ENCODE measurements at regions of chr3 and their contacts with region 1.

Region 1: GRCh38 chr3:60770532-60770931 is 480.7 kb downstream of the FHIT start:
- DNase-seq: no peak
- ATAC-seq: no peak
- H3K4me3 ChIP-seq: no peak overlapping the region
- H3K27ac ChIP-seq: no peak overlapping the region
- H3K4me1 ChIP-seq: no peaks in the 10 kb centered on the region
- H3K27me3 ChIP-seq: no peaks in the 10 kb centered on the region
- CTCF ChIP-seq: no peak
- EP300 ChIP-seq: no peak
- POLR2A ChIP-seq: no peak
- RAD21 ChIP-seq: no peak

Region 2: DNA sequence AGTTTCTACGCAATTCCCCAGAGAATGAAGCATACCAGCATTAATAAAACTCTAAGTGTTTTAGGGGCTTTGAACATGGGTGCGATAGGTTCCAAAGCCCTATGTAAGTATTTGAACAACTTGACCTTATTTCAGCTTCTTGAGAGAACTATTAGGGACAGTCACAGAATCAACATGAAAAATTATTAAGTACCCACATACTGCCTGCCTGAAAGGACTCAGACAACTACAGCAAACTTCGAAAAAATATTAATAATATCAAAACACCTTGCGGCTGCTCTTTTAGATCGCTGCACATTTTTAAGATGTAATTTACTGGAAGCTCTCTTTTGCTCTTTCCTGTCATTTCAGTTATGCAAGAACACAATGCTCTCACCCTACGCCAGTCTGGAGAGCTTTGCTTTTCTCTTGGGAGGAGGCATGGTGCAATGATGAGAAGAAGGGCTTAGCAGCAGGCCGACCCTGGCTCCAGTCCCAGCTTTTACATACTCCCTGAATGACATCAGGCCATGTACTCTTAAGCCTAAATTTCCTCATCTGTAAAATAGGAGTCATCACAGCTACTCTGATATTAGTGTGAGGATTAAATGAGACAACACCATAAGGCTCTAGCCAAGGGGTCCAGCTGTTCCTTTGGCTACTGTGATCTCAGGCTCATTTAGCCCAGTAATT is 160.0 kb before region 1 on chr3:
- CTCF ChIA-PET with region 1: no interaction called
- POLR2A ChIA-PET with region 1: no interaction called
- in situ Hi-C with region 1: loop called (anchors 10 kb)
- intact Hi-C with region 1: no loop called
- DNase-seq: no peak
- ATAC-seq: no peak
- H3K4me3 ChIP-seq: no peak overlapping the region
- H3K27ac ChIP-seq: no peak overlapping the region
- H3K4me1 ChIP-seq: no peaks in the 10 kb centered on the region
- H3K27me3 ChIP-seq: no peaks in the 10 kb centered on the region
- CTCF ChIP-seq: no peak
- EP300 ChIP-seq: no peak
- POLR2A ChIP-seq: no peak
- RAD21 ChIP-seq: no peak

Region 3: DNA sequence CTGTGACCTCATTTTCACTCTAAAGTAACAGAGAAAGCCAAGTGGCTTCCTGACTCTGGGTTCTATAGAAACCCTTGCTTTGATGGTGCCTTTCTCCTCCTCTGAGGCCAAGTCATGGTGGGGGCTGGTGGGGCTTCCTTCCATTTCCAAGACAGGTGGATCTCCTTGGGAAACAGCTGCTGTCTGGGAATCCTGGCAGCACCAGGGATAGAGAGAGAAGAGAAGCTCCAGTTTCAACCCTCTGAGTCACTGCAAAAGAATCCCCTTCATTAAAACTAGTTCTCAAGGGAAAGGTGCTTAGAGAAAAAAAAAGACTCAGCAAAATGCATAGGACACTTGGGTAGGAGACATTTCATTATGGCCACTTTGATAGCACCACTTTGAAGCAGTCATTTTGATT is 133.7 kb before region 1 on chr3:
- CTCF ChIA-PET with region 1: no interaction called
- POLR2A ChIA-PET with region 1: no interaction called
- in situ Hi-C with region 1: no loop called
- intact Hi-C with region 1: no loop called
- DNase-seq: no peak
- ATAC-seq: no peak
- H3K4me3 ChIP-seq: no peak overlapping the region
- H3K27ac ChIP-seq: no peak overlapping the region
- H3K4me1 ChIP-seq: no peaks in the 10 kb centered on the region
- H3K27me3 ChIP-seq: no peaks in the 10 kb centered on the region
- CTCF ChIP-seq: no peak
- EP300 ChIP-seq: no peak
- POLR2A ChIP-seq: no peak
- RAD21 ChIP-seq: no peak

Region 4: DNA sequence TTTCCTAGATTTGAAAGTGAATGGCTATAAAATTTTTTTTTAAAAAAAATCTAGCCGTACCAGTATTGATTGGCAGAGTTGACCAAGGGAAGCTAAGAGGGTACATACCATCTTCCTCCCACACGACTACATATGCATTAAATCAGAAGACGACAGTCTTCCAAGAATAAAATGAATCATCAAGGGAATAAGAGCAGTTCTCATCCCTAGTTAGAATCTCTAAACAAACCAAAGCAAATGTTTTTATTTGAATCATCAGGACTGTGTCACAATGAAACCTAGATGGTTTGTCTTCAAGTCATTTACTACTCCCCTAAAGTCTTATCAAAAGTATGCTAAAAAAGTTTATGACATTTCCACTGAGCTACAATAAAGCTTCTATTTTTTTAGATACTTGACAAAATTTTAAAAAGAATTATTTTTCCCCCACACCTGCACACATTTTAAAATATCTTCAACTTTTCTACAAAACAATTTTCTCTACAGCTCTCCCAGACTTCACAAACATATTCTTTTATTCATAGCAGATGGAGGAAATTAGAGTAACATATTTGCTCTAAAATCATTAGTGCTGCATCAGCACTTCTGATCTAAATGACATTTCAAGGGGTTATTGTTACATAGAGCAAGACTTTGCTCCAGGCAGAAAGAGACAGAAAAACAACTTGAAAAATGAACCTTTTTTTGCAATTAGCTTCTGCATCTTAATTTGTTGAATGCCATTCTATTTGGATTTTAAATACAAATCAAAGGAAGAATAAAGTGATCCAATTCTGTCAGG is 66.4 kb before region 1 on chr3:
- CTCF ChIA-PET with region 1: no interaction called
- POLR2A ChIA-PET with region 1: no interaction called
- in situ Hi-C with region 1: no loop called
- intact Hi-C with region 1: no loop called
- DNase-seq: no peak
- ATAC-seq: no peak
- H3K4me3 ChIP-seq: no peak overlapping the region
- H3K27ac ChIP-seq: no peak overlapping the region
- H3K4me1 ChIP-seq: no peaks in the 10 kb centered on the region
- H3K27me3 ChIP-seq: no peaks in the 10 kb centered on the region
- CTCF ChIP-seq: no peak
- EP300 ChIP-seq: no peak
- POLR2A ChIP-seq: no peak
- RAD21 ChIP-seq: no peak

Region 5: DNA sequence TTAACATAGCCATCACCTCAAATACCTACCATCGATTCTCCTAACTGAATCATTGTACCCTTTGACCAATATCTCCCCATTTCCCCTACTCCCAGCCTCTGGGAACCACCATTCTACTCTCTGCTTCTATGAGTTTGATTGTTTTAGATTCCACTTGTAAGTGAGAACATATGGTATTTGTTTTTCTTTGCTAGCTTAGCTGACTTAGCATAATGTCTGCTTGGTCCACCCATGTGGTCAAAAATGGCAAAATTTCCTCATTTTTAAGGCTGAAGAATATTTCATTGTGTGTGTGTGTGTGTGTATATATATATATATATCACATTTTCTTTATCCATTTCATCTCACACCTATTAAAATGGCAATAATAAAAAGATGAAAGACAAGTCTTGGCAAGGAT is 11.4 kb after region 1 on chr3:
- CTCF ChIA-PET with region 1: no interaction called
- POLR2A ChIA-PET with region 1: no interaction called
- in situ Hi-C with region 1: no loop called
- intact Hi-C with region 1: no loop called
- DNase-seq: no peak
- ATAC-seq: no peak
- H3K4me3 ChIP-seq: no peak overlapping the region
- H3K27ac ChIP-seq: no peak overlapping the region
- H3K4me1 ChIP-seq: no peaks in the 10 kb centered on the region
- H3K27me3 ChIP-seq: no peaks in the 10 kb centered on the region
- CTCF ChIP-seq: no peak
- EP300 ChIP-seq: no peak
- POLR2A ChIP-seq: no peak
- RAD21 ChIP-seq: no peak

Region 6: GRCh38 chr3:60909511-60909910 is 139.0 kb after region 1 on chr3:
- CTCF ChIA-PET with region 1: no interaction called
- POLR2A ChIA-PET with region 1: no interaction called
- in situ Hi-C with region 1: no loop called
- intact Hi-C with region 1: no loop called
- DNase-seq: no peak
- ATAC-seq: no peak
- H3K4me3 ChIP-seq: no peak overlapping the region
- H3K27ac ChIP-seq: no peak overlapping the region
- H3K4me1 ChIP-seq: no peaks in the 10 kb centered on the region
- H3K27me3 ChIP-seq: no peaks in the 10 kb centered on the region
- CTCF ChIP-seq: no peak
- EP300 ChIP-seq: no peak
- POLR2A ChIP-seq: no peak
- RAD21 ChIP-seq: no peak